ENCODE measurements at regions of chr11 and their contacts with region 1.

Region 1: DNA sequence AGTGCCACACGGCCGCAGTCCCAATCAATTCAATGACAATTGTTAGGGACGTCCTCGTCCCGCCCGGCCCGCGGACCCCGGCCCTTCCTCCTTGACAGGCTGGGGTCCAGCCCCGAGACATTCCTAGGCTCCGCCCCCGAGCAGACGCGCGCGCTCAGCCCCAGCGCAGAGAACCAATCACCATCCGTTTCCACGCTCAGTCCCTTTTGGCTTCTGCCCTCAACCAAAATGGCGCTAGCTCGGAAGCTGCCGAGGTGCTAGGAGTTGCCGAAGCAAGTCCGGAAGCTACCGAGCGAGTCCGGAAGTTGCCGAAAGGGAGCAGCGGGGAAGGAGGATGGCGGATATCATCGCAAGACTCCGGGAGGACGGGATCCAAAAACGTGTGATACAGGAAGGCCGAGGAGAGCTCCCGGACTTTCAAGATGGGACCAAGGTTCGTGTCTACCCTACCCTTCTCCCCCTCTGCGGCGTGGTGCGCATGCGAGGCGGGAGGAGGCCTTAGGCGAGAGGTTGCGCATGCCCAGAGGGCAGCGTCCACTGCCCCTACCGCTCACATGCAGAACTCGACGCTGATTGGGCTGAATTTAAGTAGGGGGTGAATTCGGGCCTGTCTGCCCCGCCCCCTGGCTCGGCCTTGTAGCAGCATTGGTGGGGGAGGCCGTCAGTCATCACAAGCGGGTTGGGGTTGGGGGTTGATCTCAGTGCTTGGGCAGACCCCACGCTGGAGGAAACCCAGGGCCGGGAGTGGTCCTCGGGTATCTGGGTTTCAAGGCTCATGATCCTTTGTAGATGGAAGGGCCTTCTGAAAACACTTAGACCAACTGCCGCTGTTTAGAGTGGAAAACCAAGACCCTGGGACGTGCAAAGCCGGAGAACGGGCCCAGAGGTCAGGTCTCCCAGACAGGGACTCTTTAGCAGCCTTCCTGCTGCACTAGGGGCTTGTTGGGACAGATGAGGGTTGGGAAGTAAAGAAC is at the start of gene AIP:
- DNase-seq: peak; percentile 94
- ATAC-seq: peak; percentile 81
- H3K4me3 Mint-ChIP-seq: peak within 1 kb of the TSS; percentile 93
- H3K27ac Mint-ChIP-seq: peak within 1 kb of the TSS; percentile 100
- H3K4me1 Mint-ChIP-seq: peaks cover 47% of the 10 kb centered on the region
- H3K27me3 Mint-ChIP-seq: peaks cover under 1% of the 10 kb centered on the region
- total RNA-seq, gene AIP: 161 to 166 TPM

Region 2: GRCh38 chr11:67409261-67409666 is 73.8 kb before region 1 on chr11:
- POLR2A ChIA-PET with region 1: interaction called, 80 read pairs
- DNase-seq: peak; percentile 86
- ATAC-seq: peak; percentile 69
- H3K4me3 Mint-ChIP-seq: peak overlapping the region; percentile 98
- H3K27ac Mint-ChIP-seq: peak overlapping the region; percentile 95
- H3K4me1 Mint-ChIP-seq: peaks cover 67% of the 10 kb centered on the region
- H3K27me3 Mint-ChIP-seq: no peaks in the 10 kb centered on the region

Region 3: DNA sequence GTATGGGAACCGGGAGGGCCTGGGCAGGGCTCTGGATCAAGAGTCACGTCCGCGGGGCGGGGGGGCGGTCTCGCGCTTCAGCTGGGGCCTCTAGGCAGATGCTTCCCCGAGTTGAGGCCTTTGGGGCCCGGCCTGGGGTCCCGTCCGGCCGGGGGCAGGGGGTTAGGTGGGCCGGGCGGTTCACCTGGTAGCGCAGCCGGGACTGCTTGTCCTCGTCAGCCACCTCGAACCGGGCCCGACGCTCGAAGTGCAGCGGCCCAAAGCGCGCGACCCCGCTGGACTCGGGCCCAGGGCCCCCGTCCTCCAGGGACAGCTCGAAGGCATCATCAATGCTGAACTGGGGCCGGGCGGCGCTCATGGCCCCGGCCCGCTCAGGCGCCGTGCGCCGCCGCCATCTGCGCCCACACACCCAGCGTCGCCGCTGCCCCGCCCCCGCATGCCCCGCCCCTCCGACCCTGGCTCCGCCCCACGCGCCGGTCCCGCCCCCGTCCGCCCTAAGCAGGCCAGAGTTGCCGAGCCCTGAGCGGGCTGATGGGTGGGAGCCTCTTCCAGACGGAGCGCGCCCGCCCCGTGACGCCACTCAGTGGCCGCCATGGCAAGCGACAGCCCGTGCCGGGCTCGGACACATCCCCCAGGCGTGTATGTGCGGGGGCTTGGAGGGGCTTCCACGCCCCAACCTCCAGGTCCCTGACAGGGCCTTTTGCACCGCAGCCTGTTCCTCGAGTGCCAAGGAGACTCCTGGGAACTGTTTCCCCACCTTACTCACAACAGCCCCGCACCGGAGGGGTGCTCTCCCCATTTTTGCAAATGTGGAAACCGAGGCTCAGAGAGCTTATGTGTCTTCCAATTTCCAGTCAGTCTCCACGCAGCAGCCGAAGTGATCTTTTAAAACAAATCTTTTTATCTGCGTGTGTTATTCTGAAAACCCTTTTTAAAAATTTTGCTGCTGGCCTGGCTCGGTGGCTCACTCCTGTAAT is 14.0 kb before region 1 on chr11 and contains the start of gene TMEM134:
- POLR2A ChIA-PET with region 1: interaction called, 24 read pairs
- DNase-seq: peak; percentile 97
- ATAC-seq: peak; percentile 76
- H3K4me3 Mint-ChIP-seq: peak within 1 kb of the TSS; percentile 95
- H3K27ac Mint-ChIP-seq: peak within 1 kb of the TSS; percentile 79
- H3K4me1 Mint-ChIP-seq: peaks cover 21% of the 10 kb centered on the region
- H3K27me3 Mint-ChIP-seq: no peaks in the 10 kb centered on the region
- total RNA-seq, gene TMEM134: 63.2 to 69.1 TPM

Region 4: GRCh38 chr11:67505605-67506396 is 22.7 kb after region 1 on chr11:
- POLR2A ChIA-PET with region 1: interaction called, 35 read pairs
- DNase-seq: peak; percentile 94
- ATAC-seq: peak; percentile 40
- H3K4me3 Mint-ChIP-seq: peak overlapping the region; percentile 93
- H3K27ac Mint-ChIP-seq: peak overlapping the region; percentile 94
- H3K4me1 Mint-ChIP-seq: peaks cover 37% of the 10 kb centered on the region
- H3K27me3 Mint-ChIP-seq: peaks cover 5% of the 10 kb centered on the region

Region 5: DNA sequence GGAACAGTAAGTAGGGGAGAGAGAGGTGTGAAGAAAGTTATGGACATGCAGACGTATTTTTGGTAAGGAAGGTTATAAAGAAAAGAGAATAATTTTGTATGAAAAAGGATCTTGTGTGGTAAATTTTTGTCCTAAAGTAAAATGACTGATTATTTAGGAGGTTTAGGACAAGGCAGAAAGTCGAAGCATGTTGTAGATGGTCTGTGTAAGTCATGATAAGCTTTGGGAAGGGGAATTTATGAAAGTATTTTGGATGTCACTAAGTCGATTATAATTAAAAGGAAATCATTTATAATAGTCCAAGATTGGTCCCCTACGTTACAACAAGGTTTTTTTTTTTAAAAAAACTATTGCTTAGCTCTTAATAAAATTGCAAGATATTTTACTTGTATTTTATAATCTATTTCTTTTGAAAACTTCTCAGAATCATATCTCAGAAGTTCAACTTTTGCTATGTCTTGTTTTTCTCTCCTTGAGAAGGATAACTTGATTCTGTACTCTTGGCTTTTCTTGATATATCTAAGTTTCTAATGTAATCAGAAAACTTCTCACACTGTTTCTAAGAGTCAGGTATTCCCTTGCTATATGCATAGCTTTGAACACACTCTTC is 51.1 kb after region 1 on chr11:
- POLR2A ChIA-PET with region 1: no interaction called
- DNase-seq: no peak
- ATAC-seq: no peak
- H3K4me3 Mint-ChIP-seq: no peak overlapping the region
- H3K27ac Mint-ChIP-seq: no peak overlapping the region
- H3K4me1 Mint-ChIP-seq: no peaks in the 10 kb centered on the region
- H3K27me3 Mint-ChIP-seq: no peaks in the 10 kb centered on the region

Region 6: DNA sequence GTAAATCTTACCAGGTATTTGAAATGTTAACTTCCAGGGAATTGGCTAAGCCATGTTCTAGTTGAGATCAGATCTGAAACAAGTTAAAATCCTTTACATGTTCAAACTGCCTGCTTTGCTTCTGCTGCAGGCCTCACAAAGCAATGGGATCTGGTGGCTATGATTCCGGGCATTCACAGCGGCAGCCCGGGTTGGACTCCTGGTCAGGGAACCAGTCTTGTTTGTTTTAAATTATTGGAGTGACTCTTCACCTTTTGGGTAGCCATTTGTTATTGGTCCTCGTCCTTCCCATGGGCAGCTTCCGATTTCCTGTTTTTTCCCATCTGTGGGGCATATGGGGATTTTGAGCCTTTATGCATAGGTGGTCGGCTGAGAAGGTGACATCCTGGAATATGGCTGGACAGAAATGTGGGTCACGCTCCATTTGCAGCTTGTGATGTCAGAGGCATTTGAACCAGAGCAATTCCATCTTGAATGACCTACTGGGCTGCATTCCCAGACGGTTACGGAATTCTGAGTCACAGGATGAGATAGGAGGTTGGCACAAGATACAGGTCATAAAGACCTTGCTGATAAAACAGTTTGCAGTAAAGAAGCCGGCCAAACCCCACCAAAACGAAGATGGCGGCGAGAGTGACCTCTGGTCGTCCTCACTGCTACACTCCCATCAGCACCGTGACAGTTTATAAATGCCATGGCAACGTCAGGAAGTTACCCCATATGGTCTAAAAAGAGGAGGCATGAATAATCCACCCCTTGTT is 80.4 kb after region 1 on chr11:
- POLR2A ChIA-PET with region 1: no interaction called
- DNase-seq: no peak
- ATAC-seq: no peak
- H3K4me3 Mint-ChIP-seq: no peak overlapping the region
- H3K27ac Mint-ChIP-seq: no peak overlapping the region
- H3K4me1 Mint-ChIP-seq: peaks cover 9% of the 10 kb centered on the region
- H3K27me3 Mint-ChIP-seq: peaks cover 29% of the 10 kb centered on the region

Measured in activated naive CD8-positive, alpha-beta T cell treated with anti-CD3 and anti-CD28 coated beads, Interleukin-2, amount 10 ng/mL, durations not matched to agents 7 days and 5 days (primary cell).